ENCODE measurements at regions of chr6 and their contacts with region 1.

Region 1: GRCh38 chr6:26025894-26026832 is 61.1 kb upstream of the HFE start:
- DNase-seq: peak; percentile 86 to 98
- ATAC-seq: peak; percentile 41 to 60 (median 44)
- H3K4me3 ChIP-seq: peak overlapping the region; percentile 52
- H3K4me3 Mint-ChIP-seq: peak overlapping the region; percentile 87
- H3K27ac ChIP-seq: peak overlapping the region; percentile 96
- H3K27ac Mint-ChIP-seq: peak overlapping the region; percentile 99 to 100
- H3K4me1 ChIP-seq: peaks cover 22% of the 10 kb centered on the region
- H3K4me1 Mint-ChIP-seq: peaks cover 38 to 42% of the 10 kb centered on the region in 2 donors
- H3K27me3 ChIP-seq: no peaks in the 10 kb centered on the region
- H3K27me3 Mint-ChIP-seq: peaks cover 0 to 2% of the 10 kb centered on the region in 2 donors
- CTCF ChIP-seq: peak; percentile 80

Region 2: DNA sequence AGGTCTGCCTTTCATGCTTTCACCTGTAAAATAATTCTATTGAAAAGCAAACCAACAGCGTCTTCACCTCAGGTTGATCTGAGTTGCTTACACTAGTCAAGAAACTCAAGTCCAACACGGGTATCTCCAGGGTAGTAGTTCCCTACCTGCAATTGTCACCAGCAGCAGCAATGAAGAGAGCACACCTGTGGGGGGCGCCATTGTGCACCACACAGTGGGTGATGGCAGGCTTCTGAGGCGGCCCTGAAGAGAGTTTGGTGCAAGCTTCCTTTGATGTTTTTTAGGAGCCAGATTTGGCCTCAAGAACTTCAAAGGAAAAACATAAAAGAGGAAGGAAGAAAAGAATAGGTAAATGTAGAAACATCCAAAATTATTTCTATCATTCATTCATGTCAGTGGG is 1425.3 kb before region 1 on chr6:
- intact Hi-C with region 1: no loop called
- DNase-seq: no peak
- ATAC-seq: no peak
- H3K4me3 ChIP-seq: no peak overlapping the region
- H3K4me3 Mint-ChIP-seq: no peak overlapping the region
- H3K27ac ChIP-seq: no peak overlapping the region
- H3K27ac Mint-ChIP-seq: no peak overlapping the region
- H3K4me1 ChIP-seq: no peaks in the 10 kb centered on the region
- H3K4me1 Mint-ChIP-seq: no peaks in the 10 kb centered on the region
- H3K27me3 ChIP-seq: no peaks in the 10 kb centered on the region
- H3K27me3 Mint-ChIP-seq: peaks cover 4 to 8% of the 10 kb centered on the region in 2 donors
- CTCF ChIP-seq: no peak

Region 3: GRCh38 chr6:25962149-25963127 is 63.7 kb before region 1 on chr6 and contains the start of gene TRIM38:
- intact Hi-C with region 1: no loop called
- DNase-seq: peak; percentile 48 to 93
- ATAC-seq: peak; percentile 94 to 95 (median 94)
- H3K4me3 ChIP-seq: peak within 1 kb of the TSS; percentile 88
- H3K4me3 Mint-ChIP-seq: peak within 1 kb of the TSS; percentile 98
- H3K27ac ChIP-seq: peak within 1 kb of the TSS; percentile 97
- H3K27ac Mint-ChIP-seq: peak within 1 kb of the TSS; percentile 96 to 99
- H3K4me1 ChIP-seq: peaks cover 52% of the 10 kb centered on the region
- H3K4me1 Mint-ChIP-seq: peaks cover 68 to 71% of the 10 kb centered on the region in 2 donors
- H3K27me3 ChIP-seq: no peaks in the 10 kb centered on the region
- H3K27me3 Mint-ChIP-seq: no peaks in the 10 kb centered on the region
- CTCF ChIP-seq: no peak
- total RNA-seq, gene TRIM38: 25.5 to 30.5 (median 27.1) TPM

Region 4: DNA sequence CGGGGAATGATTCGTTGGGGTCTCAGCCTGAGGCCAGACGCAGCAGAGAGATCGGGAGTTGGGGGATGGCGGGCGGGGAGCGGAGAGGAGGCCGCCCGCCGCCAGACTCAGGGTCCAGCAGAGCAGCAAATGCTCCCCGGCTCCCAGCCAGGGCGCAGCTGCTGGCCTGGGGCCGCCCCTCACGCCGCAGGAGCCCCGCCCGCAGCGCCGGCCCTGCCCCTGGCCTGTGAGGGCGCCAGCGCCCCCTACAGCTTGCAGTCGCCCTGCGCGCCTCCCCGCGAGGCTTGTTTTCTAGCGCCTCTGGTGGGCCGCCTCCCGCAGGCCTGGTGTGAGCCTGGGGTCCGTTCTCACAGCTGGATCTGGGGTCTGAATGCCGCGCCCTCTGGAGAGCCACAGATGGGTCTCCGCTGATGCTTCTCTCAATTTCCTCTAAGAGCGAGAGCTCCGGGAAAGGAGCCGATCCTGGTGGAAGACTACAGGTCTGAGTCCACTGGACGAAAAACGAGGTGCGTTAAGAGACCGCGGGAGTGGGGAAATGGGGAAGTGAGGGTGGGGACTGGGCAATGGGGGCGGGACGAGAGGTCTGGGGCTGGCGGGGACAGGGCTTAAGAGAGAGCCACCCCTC is 33.6 kb before region 1 on chr6:
- intact Hi-C with region 1: loop called (anchors 2 kb)
- DNase-seq: peak; percentile 95 to 97
- ATAC-seq: peak; percentile 96 to 99 (median 96)
- H3K4me3 ChIP-seq: peak overlapping the region; percentile 82
- H3K4me3 Mint-ChIP-seq: peak overlapping the region; percentile 97
- H3K27ac ChIP-seq: peak overlapping the region; percentile 85
- H3K27ac Mint-ChIP-seq: peak overlapping the region; percentile 93 to 96
- H3K4me1 ChIP-seq: peaks cover 14% of the 10 kb centered on the region
- H3K4me1 Mint-ChIP-seq: peaks cover 23 to 26% of the 10 kb centered on the region in 2 donors
- H3K27me3 ChIP-seq: no peaks in the 10 kb centered on the region
- H3K27me3 Mint-ChIP-seq: no peaks in the 10 kb centered on the region
- CTCF ChIP-seq: peak; percentile 99

Region 5: GRCh38 chr6:26054857-26055669 is 28.9 kb after region 1 on chr6:
- intact Hi-C with region 1: loop called (anchors 1 kb)
- DNase-seq: peak; percentile 83 to 92
- ATAC-seq: peak; percentile 71 to 82 (median 71)
- H3K4me3 ChIP-seq: peak overlapping the region; percentile 78
- H3K4me3 Mint-ChIP-seq: peak overlapping the region; percentile 96
- H3K27ac ChIP-seq: peak overlapping the region; percentile 92
- H3K27ac Mint-ChIP-seq: peak overlapping the region; percentile 98 to 99
- H3K4me1 ChIP-seq: peaks cover 19% of the 10 kb centered on the region
- H3K4me1 Mint-ChIP-seq: peaks cover 29 to 35% of the 10 kb centered on the region in 2 donors
- H3K27me3 ChIP-seq: no peaks in the 10 kb centered on the region
- H3K27me3 Mint-ChIP-seq: no peaks in the 10 kb centered on the region
- CTCF ChIP-seq: no peak

Region 6: DNA sequence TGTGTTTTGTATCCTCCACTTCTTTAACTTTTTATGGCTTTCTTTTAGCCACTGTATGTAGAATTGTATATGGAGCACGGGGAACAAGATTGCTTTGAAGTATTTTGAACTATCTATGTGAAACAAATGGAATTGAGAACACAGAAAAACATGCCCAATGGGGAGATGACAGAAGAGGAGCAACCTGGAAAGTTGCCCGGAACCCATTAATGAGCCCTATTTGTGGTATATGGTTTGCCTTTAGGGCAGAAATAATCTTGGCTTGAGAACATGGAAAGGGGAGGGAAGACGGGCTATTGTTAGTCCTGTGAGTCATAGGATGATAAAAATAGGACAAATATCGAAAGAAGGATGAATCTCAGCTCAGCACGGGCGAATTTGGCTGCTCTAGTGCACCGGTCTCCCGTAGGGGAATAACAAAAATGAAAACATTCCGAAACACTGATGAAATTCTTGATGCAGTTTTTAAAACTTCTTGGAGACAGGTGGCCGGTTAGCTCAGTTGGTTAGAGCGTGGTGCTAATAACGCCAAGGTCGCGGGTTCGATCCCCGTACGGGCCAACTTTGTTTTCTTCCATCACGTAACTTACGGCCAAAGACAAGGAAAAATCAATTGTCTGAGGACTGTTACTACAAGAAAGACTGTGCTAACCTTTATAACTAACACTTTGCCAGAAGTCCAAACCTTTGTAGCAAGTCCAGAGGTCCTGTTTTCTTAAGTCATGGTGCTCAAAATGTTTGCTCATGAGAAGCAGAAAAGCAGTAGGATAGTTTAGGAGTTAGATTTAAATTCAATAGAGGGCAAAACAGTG is 527.7 kb after region 1 on chr6:
- intact Hi-C with region 1: loop called (anchors 10 kb)
- DNase-seq: peak; percentile 77 to 91
- ATAC-seq: peak; percentile 51 to 62 (median 61)
- H3K4me3 ChIP-seq: peak overlapping the region; percentile 71
- H3K4me3 Mint-ChIP-seq: no peak overlapping the region
- H3K27ac ChIP-seq: peak overlapping the region; percentile 65
- H3K27ac Mint-ChIP-seq: no peak overlapping the region
- H3K4me1 ChIP-seq: peaks cover 23% of the 10 kb centered on the region
- H3K4me1 Mint-ChIP-seq: peaks cover 24 to 25% of the 10 kb centered on the region in 2 donors
- H3K27me3 ChIP-seq: no peaks in the 10 kb centered on the region
- H3K27me3 Mint-ChIP-seq: no peaks in the 10 kb centered on the region
- CTCF ChIP-seq: no peak

Region 7: DNA sequence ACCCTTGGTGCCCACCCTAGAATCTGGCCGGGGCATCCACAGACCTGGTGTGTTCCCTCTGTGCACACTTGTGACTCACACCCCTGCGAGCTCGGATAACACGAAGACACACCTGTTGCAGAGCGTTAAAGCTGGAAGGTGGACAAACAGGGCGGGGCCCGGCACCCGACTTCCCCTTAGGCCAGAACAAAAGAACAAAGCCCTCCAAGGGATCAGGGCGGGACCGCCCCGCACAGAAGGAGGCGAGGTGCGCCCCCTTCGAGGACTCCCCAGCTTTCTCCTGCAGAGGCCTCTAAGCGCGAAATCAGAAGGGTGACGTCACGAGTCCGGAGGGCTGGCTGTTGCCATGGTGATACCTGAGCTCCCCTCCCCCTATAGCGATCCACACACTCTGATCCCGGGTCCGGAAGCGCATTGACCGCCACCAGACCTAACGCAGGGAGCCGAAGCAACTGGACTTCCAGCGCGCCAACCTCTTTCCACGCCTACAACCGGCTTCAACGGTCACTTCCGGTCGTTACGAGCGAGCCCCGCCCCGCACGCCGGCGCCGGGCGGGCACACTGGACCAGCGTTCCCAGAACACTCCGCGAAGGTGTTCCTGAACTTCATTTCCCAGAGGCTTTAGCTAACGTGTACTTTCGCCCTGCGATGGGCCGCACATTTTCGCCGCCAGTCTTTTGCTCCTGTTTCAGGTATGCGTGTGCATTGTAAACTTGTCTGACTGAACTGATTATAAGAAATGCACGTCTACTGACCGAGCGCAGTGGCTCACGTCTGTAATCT is 1446.6 kb after region 1 on chr6 and contains the start of gene ZNF184:
- intact Hi-C with region 1: loop called (anchors 10 kb)
- DNase-seq: peak; percentile 84 to 92
- ATAC-seq: peak; percentile 78 to 94 (median 86)
- H3K4me3 ChIP-seq: peak within 1 kb of the TSS; percentile 65
- H3K4me3 Mint-ChIP-seq: peak within 1 kb of the TSS; percentile 96
- H3K27ac ChIP-seq: peak within 1 kb of the TSS; percentile 85
- H3K27ac Mint-ChIP-seq: peak within 1 kb of the TSS; percentile 94
- H3K4me1 ChIP-seq: peaks cover 17% of the 10 kb centered on the region
- H3K4me1 Mint-ChIP-seq: peaks cover 40 to 48% of the 10 kb centered on the region in 2 donors
- H3K27me3 ChIP-seq: no peaks in the 10 kb centered on the region
- H3K27me3 Mint-ChIP-seq: no peaks in the 10 kb centered on the region
- CTCF ChIP-seq: no peak
- total RNA-seq, gene ZNF184: 12.8 to 21.7 (median 16.2) TPM